MCF 10A (cell line): ENCODE measurements at regions of chr16 and their contacts with region 1.

Region 1: DNA sequence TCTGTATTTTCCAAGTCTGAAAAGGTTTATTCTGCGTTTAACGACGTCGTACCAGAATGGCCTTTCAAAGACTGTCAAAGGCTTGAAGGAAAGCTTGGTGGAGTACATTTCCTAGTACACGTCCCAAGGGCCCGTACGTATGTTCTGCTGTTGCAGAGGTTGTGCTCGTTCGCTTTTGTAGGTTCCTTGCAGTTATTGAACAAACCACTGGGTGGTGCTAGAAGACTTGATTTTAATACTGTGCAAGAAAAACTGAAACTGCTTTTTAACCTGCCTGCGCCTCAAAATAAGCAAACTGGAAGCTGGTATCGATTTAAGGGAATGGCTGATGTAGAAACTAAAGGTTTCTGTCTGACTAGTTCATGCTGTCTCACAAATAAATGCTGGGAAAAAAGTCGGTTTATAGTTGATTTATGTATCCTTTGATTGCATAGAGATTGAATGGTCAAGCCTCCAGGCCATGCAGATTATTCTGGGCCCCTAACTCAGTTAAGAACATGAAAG is 54.6 kb downstream of the USP10 start:
- DNase-seq: peak; percentile 81
- H3K4me3 Mint-ChIP-seq: no peak overlapping the region
- H3K27ac Mint-ChIP-seq: peak overlapping the region; percentile 57
- H3K4me1 Mint-ChIP-seq: peaks cover 18% of the 10 kb centered on the region
- H3K27me3 Mint-ChIP-seq: no peaks in the 10 kb centered on the region
- CTCF ChIP-seq: peak; percentile 67

Region 2: DNA sequence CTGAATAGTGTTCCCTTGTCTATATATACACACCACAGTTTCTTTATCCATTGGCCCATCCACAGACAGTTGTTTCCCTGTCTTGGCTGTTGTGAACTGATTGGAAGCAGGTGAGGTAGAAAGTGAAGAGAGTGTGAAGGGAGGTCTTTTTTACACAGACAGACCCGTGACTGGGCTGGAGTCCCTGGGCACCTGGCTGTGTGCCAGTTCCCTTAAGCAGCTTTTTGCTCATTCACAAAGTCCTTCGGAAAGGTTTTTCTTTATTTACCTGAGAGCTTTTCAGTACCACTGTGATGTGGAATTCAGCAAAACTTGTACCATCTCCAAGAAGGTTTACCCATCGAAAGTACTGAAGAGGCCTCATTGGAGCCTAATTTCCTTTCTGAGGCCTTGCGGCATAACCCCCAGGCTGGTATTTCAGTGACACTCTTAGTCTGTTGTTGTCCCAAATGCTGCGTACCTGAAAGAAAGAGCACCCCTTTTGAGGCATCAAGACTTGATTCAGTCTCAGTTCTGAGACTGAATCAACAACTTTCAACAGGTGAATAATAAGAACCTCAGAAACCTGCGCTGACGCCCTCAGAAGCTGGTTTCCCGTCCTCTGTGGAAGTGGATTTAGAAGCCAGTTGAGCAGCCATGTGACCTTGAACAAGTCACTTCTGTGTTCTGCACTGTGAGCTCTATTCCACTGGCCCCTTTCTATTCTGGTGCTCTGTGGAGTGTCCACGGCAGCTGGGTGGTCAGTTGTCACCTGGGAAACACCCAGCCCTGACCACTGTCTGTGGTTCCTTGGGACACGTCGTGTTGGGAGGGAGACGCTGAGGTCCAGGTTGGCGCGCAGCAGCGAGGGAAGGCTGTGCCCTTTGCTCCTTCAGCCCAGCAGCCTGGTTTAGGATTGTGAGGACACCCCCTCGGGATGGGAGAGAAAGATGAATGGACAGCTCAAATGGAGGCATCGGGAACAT is 11.5 kb after region 1 on chr16:
- CTCF ChIA-PET with region 1: interaction called, 20 read pairs
- POLR2A ChIA-PET with region 1: interaction called, 4 read pairs
- intact Hi-C with region 1: no loop called
- DNase-seq: no peak
- H3K4me3 Mint-ChIP-seq: no peak overlapping the region
- H3K27ac Mint-ChIP-seq: no peak overlapping the region
- H3K4me1 Mint-ChIP-seq: no peaks in the 10 kb centered on the region
- H3K27me3 Mint-ChIP-seq: no peaks in the 10 kb centered on the region
- CTCF ChIP-seq: no peak

Region 3: DNA sequence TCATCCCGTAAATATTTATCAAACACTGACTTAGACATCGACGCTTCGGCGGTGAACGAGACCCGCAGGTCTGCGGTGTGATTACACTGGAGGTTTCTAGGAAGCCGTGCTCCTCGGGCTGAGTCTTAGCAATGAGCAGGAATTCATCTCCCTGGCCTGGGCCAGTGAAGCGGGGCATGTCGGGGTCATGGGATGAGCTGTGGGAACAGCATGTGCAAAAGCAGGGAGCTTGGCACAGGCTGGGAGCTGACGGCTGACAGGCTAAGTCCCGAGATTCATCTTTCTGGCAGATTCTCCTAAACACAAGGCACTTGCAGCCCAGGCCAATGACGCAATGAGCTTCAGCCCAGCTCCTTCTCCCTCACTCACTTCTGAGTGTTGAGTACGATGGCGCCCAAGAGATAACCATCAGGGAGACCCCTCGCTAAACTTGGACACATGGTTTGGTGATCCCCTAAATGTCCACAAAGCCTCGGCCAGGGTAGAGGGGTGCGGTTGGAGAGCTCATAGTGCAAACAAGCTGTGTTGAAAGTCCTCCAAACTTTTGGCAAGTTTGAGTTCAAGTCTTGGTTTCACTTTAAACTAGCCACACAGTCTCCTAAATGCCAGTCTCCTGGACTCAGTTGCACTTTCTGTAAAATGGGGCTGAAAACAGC is 78.2 kb after region 1 on chr16:
- CTCF ChIA-PET with region 1: no interaction called
- POLR2A ChIA-PET with region 1: no interaction called
- intact Hi-C with region 1: no loop called
- DNase-seq: peak; percentile 82
- H3K4me3 Mint-ChIP-seq: no peak overlapping the region
- H3K27ac Mint-ChIP-seq: no peak overlapping the region
- H3K4me1 Mint-ChIP-seq: peaks cover 15% of the 10 kb centered on the region
- H3K27me3 Mint-ChIP-seq: no peaks in the 10 kb centered on the region
- CTCF ChIP-seq: no peak

Region 4: DNA sequence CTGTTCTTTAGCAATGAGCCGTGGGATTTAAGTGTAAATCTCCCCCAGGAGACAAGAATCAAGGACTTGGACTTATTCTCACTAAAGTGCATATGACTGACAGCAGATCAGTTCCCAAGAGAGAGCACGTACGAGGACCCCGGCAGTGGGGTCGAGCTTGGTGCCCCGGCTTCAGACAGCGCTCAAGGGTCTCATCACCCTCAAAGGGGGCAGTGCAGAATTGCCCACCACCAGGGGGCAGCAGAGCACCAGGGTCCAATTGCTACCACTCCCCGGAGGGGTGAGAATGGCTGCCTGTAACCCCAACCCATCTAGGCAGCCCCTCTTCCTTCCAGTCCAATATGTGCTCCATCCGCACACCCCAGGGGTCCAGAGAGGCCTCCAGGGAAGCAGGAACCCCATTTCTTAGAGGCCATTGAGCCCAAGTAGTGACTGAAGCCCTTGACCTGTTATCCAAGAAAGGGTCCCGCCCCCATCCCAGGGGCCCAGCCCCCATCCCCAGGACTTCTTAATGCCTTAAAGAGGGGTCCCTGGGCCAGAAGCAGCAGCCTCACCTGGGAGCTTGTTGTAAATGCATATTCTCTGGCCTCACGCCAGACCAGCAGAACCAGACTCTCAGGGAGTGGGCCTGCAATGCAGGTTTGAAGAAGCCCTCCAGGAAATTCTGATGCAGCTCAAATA is 170.8 kb after region 1 on chr16:
- CTCF ChIA-PET with region 1: interaction called, 20 read pairs
- POLR2A ChIA-PET with region 1: no interaction called
- intact Hi-C with region 1: loop called (anchors 1 kb)
- DNase-seq: peak; percentile 59
- H3K4me3 Mint-ChIP-seq: no peak overlapping the region
- H3K27ac Mint-ChIP-seq: no peak overlapping the region
- H3K4me1 Mint-ChIP-seq: peaks cover 6% of the 10 kb centered on the region
- H3K27me3 Mint-ChIP-seq: no peaks in the 10 kb centered on the region
- CTCF ChIP-seq: peak; percentile 91

Region 5: GRCh38 chr16:84963066-84963465 is 208.7 kb after region 1 on chr16:
- CTCF ChIA-PET with region 1: interaction called, 137 read pairs
- POLR2A ChIA-PET with region 1: no interaction called
- intact Hi-C with region 1: no loop called
- DNase-seq: no peak
- H3K4me3 Mint-ChIP-seq: no peak overlapping the region
- H3K27ac Mint-ChIP-seq: no peak overlapping the region
- H3K4me1 Mint-ChIP-seq: peaks cover 5% of the 10 kb centered on the region
- H3K27me3 Mint-ChIP-seq: peaks cover 51% of the 10 kb centered on the region
- CTCF ChIP-seq: no peak

Region 6: GRCh38 chr16:85086347-85087291 is 332.2 kb after region 1 on chr16:
- CTCF ChIA-PET with region 1: interaction called, 9 read pairs
- POLR2A ChIA-PET with region 1: no interaction called
- intact Hi-C with region 1: loop called (anchors 10 kb)
- DNase-seq: peak; percentile 75
- H3K4me3 Mint-ChIP-seq: no peak overlapping the region
- H3K27ac Mint-ChIP-seq: no peak overlapping the region
- H3K4me1 Mint-ChIP-seq: no peaks in the 10 kb centered on the region
- H3K27me3 Mint-ChIP-seq: no peaks in the 10 kb centered on the region
- CTCF ChIP-seq: peak; percentile 67